Mammary epithelial cell (primary cell): ENCODE measurements at regions of chr12 and their contacts with region 1.

Region 1: GRCh38 chr12:6554168-6555017 is 1.4 kb downstream of the IFFO1 start:
- DNase-seq: no peak
- H3K4me3 ChIP-seq: peak overlapping the region in 1 of 3 experiments; percentile 49
- H3K27ac ChIP-seq: no peak overlapping the region
- H3K4me1 ChIP-seq: peaks cover 36% of the 10 kb centered on the region
- H3K27me3 ChIP-seq: no peaks in the 10 kb centered on the region
- CTCF ChIP-seq: peak; percentile 54

Region 2: DNA sequence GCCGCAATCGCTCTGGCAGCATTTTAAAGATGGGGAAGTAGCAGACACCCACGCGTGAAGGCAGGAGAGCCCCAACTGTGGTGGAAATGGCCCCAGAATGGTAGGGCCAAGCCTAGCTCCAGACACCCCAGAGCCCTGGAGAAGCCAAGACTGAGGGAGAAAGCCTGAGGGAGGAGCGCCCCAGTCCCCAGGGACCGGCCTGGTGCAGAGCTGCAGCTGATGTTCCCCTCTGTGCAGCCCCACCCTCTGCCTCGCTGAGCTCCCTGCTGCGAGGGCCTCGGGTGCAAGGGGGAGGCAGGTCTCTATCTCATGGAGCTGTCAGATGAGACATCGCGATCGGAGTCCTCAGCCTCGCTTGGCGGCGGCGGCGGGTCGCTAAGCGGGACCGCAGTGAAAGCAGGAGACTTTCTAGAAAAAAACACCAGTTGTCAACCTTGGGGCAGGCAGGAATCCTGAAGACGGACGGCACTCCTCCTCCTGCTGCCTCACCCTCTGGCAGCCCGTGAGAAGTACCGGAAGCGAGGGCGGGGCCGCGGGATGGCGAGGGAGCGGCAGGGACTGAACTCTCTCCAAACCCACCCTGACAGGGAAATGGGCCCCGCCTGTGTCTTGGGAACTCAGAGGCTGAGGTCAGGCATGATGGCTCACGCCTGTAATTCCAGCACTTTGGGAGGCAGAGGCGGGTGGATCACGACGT is 14.1 kb before region 1 on chr12:
- CTCF ChIA-PET with region 1: interaction called, 7 read pairs
- dilution Hi-C with region 1: no loop called
- in situ Hi-C with region 1: no loop called
- intact Hi-C with region 1: loop called (anchors 1 kb)
- DNase-seq: peak; percentile 97
- H3K4me3 ChIP-seq: peak overlapping the region in 2 of 3 experiments; percentile 23 to 31
- H3K27ac ChIP-seq: peak overlapping the region; percentile 64
- H3K4me1 ChIP-seq: peaks cover 43% of the 10 kb centered on the region
- H3K27me3 ChIP-seq: no peaks in the 10 kb centered on the region
- CTCF ChIP-seq: peak in 1 of 2 donors; percentile 5

Region 3: DNA sequence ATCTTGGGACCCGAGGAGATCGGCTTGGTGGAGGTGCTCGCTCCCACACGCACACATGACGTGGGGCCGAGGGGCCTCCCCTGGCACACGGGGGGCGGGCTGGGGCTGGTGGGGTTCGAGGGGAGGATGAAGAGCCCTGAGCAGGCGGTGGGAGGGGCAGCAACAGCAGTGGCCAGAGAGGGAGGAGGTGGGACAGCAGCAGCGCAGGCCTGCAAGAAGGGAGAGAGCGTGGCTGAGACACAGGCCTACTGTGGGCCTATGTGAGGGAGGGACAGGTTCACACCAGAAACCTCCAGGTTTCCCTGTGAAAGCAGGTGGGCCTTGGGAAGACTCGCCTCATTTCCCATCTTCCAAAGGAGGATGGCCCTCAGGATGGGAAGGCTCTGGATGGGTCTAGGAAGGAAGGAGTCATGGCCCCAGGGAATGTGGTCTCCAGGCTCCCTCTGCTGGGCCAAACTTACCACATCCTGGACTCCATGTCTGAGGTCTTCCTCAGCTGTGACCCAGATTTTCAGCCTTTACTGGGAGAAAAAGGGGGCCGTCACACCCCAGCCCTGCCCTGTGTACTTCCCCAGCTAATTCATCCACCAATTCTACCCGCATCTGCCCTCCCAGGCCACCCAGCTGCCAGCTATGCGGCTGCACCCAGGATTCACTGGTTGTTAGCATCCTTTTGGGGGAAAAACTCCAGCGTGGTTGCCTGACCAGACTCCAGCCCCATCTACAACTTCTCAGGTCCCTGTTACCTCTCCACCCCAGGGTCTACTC is 143.4 kb after region 1 on chr12:
- CTCF ChIA-PET with region 1: no interaction called
- dilution Hi-C with region 1: no loop called
- in situ Hi-C with region 1: no loop called
- intact Hi-C with region 1: loop called (anchors 1 kb)
- DNase-seq: peak; percentile 48
- H3K4me3 ChIP-seq: no peak overlapping the region
- H3K27ac ChIP-seq: no peak overlapping the region
- H3K4me1 ChIP-seq: peaks cover 4% of the 10 kb centered on the region
- H3K27me3 ChIP-seq: peaks cover 21% of the 10 kb centered on the region
- CTCF ChIP-seq: peak; percentile 55 to 57